ENCODE measurements at regions of chr2 and their contacts with region 1.

Region 1: DNA sequence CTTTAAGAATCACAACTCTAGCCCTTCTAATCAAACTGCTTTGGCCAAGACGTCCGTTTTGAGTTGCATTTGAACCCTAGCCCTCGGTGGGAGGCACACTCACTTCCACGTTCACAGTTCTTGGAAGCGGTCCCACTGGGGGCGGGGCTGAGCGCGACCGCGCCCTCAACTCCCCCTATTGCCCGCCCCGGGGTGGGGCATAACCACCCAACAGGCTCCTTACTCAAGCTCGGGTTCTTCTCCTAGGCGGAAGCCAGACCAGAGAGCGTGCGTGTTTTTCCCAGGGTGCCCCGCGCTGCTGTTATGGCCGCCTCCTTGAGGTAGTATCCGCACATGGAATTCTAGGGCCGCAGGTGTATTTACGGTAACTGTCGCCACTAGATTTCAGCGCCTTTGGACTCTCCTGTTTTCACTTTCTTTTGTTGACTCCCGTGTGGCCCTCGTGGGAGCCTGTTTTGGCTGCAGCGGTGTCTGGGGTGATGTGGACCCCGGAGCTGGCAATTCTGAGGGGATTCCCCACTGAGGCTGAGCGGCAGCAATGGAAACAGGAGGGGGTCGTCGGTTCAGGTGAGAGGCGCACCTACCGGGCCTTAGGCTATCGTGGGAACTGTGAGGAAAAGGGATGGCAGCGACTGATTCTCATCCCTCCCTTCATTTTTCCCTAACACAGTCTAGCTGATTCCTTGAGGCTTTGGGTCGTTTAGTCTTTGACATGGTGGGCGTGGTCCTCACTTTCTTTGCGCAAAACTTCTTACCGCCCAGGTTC is at the start of gene TTC27:
- DNase-seq: peak; percentile 97
- H3K4me3 Mint-ChIP-seq: peak within 1 kb of the TSS; percentile 87
- H3K27ac Mint-ChIP-seq: peak within 1 kb of the TSS; percentile 84
- H3K4me1 Mint-ChIP-seq: peaks cover 29% of the 10 kb centered on the region
- H3K27me3 Mint-ChIP-seq: no peaks in the 10 kb centered on the region
- total RNA-seq, gene TTC27: 27.9 to 29.8 TPM

Region 2: GRCh38 chr2:32277674-32278482 is 350.1 kb before region 1 on chr2 and contains the start of gene YIPF4:
- CTCF ChIA-PET with region 1: no interaction called
- POLR2A ChIA-PET with region 1: interaction called, 3 read pairs
- intact Hi-C with region 1: loop called (anchors 1 kb)
- DNase-seq: peak; percentile 93
- H3K4me3 Mint-ChIP-seq: peak within 1 kb of the TSS; percentile 85
- H3K27ac Mint-ChIP-seq: peak within 1 kb of the TSS; percentile 87
- H3K4me1 Mint-ChIP-seq: peaks cover 22% of the 10 kb centered on the region
- H3K27me3 Mint-ChIP-seq: no peaks in the 10 kb centered on the region
- total RNA-seq, gene YIPF4: 43.5 to 44.3 TPM

Region 3: GRCh38 chr2:32356735-32357644 is 271.0 kb before region 1 on chr2 and contains the start of gene BIRC6:
- CTCF ChIA-PET with region 1: no interaction called
- POLR2A ChIA-PET with region 1: no interaction called
- intact Hi-C with region 1: loop called (anchors 1 kb)
- DNase-seq: peak; percentile 99
- H3K4me3 Mint-ChIP-seq: peak within 1 kb of the TSS; percentile 84
- H3K27ac Mint-ChIP-seq: peak within 1 kb of the TSS; percentile 92
- H3K4me1 Mint-ChIP-seq: peaks cover 39% of the 10 kb centered on the region
- H3K27me3 Mint-ChIP-seq: no peaks in the 10 kb centered on the region
- total RNA-seq, gene BIRC6: 58.2 to 62.4 TPM

Region 4: GRCh38 chr2:32559136-32559535 is 68.9 kb before region 1 on chr2:
- CTCF ChIA-PET with region 1: interaction called, 3 read pairs
- POLR2A ChIA-PET with region 1: no interaction called
- intact Hi-C with region 1: loop called (anchors 5 kb)
- DNase-seq: no peak
- H3K4me3 Mint-ChIP-seq: no peak overlapping the region
- H3K27ac Mint-ChIP-seq: no peak overlapping the region
- H3K4me1 Mint-ChIP-seq: peaks cover 3% of the 10 kb centered on the region
- H3K27me3 Mint-ChIP-seq: no peaks in the 10 kb centered on the region

Region 5: GRCh38 chr2:32591669-32592463 is 36.1 kb before region 1 on chr2:
- CTCF ChIA-PET with region 1: no interaction called
- POLR2A ChIA-PET with region 1: no interaction called
- intact Hi-C with region 1: loop called (anchors 1 kb)
- DNase-seq: no peak
- H3K4me3 Mint-ChIP-seq: no peak overlapping the region
- H3K27ac Mint-ChIP-seq: peak overlapping the region; percentile 67
- H3K4me1 Mint-ChIP-seq: peaks cover 31% of the 10 kb centered on the region
- H3K27me3 Mint-ChIP-seq: no peaks in the 10 kb centered on the region

Region 6: DNA sequence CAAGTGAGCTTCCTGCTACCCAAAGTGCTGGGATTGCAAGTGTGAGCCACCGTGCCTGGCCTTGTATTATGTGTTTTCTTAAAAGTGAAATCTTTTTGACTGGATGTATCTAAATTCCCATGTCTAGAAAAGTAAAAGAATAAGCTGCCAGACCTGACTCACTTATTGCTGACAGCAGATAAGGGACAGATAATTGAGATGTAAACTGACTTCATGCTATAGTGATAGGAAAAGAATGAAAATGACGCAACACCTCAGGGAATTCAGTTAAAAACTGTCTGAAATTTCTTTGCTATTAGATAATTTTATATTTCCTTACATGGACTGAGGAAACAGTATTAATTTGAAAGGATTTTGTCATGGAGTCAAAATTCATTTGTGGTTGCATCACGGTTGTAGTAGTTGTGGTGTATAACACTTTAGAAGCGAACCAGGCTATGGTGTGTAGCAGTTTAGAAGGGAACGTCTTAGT is 19.2 kb after region 1 on chr2:
- CTCF ChIA-PET with region 1: no interaction called
- POLR2A ChIA-PET with region 1: no interaction called
- intact Hi-C with region 1: no loop called
- DNase-seq: no peak
- H3K4me3 Mint-ChIP-seq: no peak overlapping the region
- H3K27ac Mint-ChIP-seq: no peak overlapping the region
- H3K4me1 Mint-ChIP-seq: no peaks in the 10 kb centered on the region
- H3K27me3 Mint-ChIP-seq: no peaks in the 10 kb centered on the region

Region 7: GRCh38 chr2:33457556-33458247 is 829.7 kb after region 1 on chr2:
- CTCF ChIA-PET with region 1: no interaction called
- POLR2A ChIA-PET with region 1: no interaction called
- intact Hi-C with region 1: no loop called
- DNase-seq: no peak
- H3K4me3 Mint-ChIP-seq: no peak overlapping the region
- H3K27ac Mint-ChIP-seq: no peak overlapping the region
- H3K4me1 Mint-ChIP-seq: no peaks in the 10 kb centered on the region
- H3K27me3 Mint-ChIP-seq: no peaks in the 10 kb centered on the region

Region 8: GRCh38 chr2:33599175-33599942 is 971.4 kb after region 1 on chr2 and contains the start of gene FAM98A:
- CTCF ChIA-PET with region 1: no interaction called
- POLR2A ChIA-PET with region 1: interaction called, 3 read pairs
- intact Hi-C with region 1: loop called (anchors 5 kb)
- DNase-seq: peak; percentile 99
- H3K4me3 Mint-ChIP-seq: peak within 1 kb of the TSS; percentile 90
- H3K27ac Mint-ChIP-seq: peak within 1 kb of the TSS; percentile 82
- H3K4me1 Mint-ChIP-seq: peaks cover 22% of the 10 kb centered on the region
- H3K27me3 Mint-ChIP-seq: no peaks in the 10 kb centered on the region
- total RNA-seq, gene FAM98A: 46.7 to 46.8 TPM

Measured in activated CD4-positive, alpha-beta memory T cell treated with anti-CD3 and anti-CD28 coated beads for 36 hours (primary cell).